B cell (primary cell): ENCODE measurements at regions of chr3 and their contacts with region 1.

Region 1: GRCh38 chr3:88219138-88219792 is 69.5 kb downstream of the C3orf38 start:
- DNase-seq: peak; percentile 66
- ATAC-seq: no peak
- H3K4me3 ChIP-seq: no peak overlapping the region
- H3K4me3 Mint-ChIP-seq: no peak overlapping the region
- H3K27ac ChIP-seq: no peak overlapping the region
- H3K27ac Mint-ChIP-seq: no peak overlapping the region
- H3K4me1 ChIP-seq: peaks cover 0 to 4% of the 10 kb centered on the region in 2 donors
- H3K4me1 Mint-ChIP-seq: peaks cover 8% of the 10 kb centered on the region
- H3K27me3 ChIP-seq: no peaks in the 10 kb centered on the region
- H3K27me3 Mint-ChIP-seq: no peaks in the 10 kb centered on the region
- CTCF ChIP-seq: peak; percentile 57

Region 2: GRCh38 chr3:88369337-88369736 is 150.1 kb after region 1 on chr3:
- CTCF ChIA-PET with region 1: no interaction called
- POLR2A ChIA-PET with region 1: no interaction called
- intact Hi-C with region 1: no loop called
- DNase-seq: no peak
- ATAC-seq: no peak
- H3K4me3 ChIP-seq: no peak overlapping the region
- H3K4me3 Mint-ChIP-seq: no peak overlapping the region
- H3K27ac ChIP-seq: no peak overlapping the region
- H3K27ac Mint-ChIP-seq: no peak overlapping the region
- H3K4me1 ChIP-seq: no peaks in the 10 kb centered on the region
- H3K4me1 Mint-ChIP-seq: no peaks in the 10 kb centered on the region
- H3K27me3 ChIP-seq: no peaks in the 10 kb centered on the region
- H3K27me3 Mint-ChIP-seq: no peaks in the 10 kb centered on the region
- CTCF ChIP-seq: no peak

Region 3: DNA sequence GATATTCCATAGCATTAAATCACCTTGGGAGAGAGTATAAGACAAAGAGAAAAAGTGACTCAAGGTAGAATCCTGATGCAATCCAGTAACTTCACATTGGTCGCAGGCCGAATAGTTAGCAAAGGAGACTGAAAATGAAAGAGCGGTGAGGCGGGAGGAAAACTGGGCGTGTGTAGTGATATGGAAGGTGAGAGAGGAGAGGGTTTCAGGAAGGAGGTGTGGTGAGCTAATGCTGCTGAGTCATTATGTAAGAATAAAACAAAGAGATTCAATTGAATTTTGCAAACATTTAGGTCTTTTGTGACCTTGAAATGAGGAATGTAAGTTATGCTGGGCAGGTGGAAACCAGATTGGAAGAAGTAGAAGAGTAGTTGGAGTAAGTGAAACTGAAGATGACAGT is 165.8 kb after region 1 on chr3:
- CTCF ChIA-PET with region 1: no interaction called
- POLR2A ChIA-PET with region 1: no interaction called
- intact Hi-C with region 1: no loop called
- DNase-seq: no peak
- ATAC-seq: no peak
- H3K4me3 ChIP-seq: no peak overlapping the region
- H3K4me3 Mint-ChIP-seq: no peak overlapping the region
- H3K27ac ChIP-seq: no peak overlapping the region
- H3K27ac Mint-ChIP-seq: no peak overlapping the region
- H3K4me1 ChIP-seq: no peaks in the 10 kb centered on the region
- H3K4me1 Mint-ChIP-seq: peaks cover 2% of the 10 kb centered on the region
- H3K27me3 ChIP-seq: no peaks in the 10 kb centered on the region
- H3K27me3 Mint-ChIP-seq: no peaks in the 10 kb centered on the region
- CTCF ChIP-seq: no peak

Region 4: GRCh38 chr3:89098964-89099585 is 879.8 kb after region 1 on chr3:
- CTCF ChIA-PET with region 1: interaction called, 8 read pairs
- POLR2A ChIA-PET with region 1: no interaction called
- intact Hi-C with region 1: loop called (anchors 1 kb)
- DNase-seq: peak; percentile 68
- ATAC-seq: peak; percentile 87
- H3K4me3 ChIP-seq: no peak overlapping the region
- H3K4me3 Mint-ChIP-seq: no peak overlapping the region
- H3K27ac ChIP-seq: no peak overlapping the region
- H3K27ac Mint-ChIP-seq: no peak overlapping the region
- H3K4me1 ChIP-seq: no peaks in the 10 kb centered on the region
- H3K4me1 Mint-ChIP-seq: no peaks in the 10 kb centered on the region
- H3K27me3 ChIP-seq: no peaks in the 10 kb centered on the region
- H3K27me3 Mint-ChIP-seq: peaks cover 6% of the 10 kb centered on the region
- CTCF ChIP-seq: peak; percentile 99